ENCODE measurements at regions of chr17 and their contacts with region 1.

Region 1: GRCh38 chr17:18921912-18922451 is 30.0 kb upstream of the SLC5A10 start:
- DNase-seq: peak; percentile 37
- H3K4me3 Mint-ChIP-seq: peak overlapping the region; percentile 8
- H3K27ac Mint-ChIP-seq: peak overlapping the region; percentile 67
- H3K4me1 Mint-ChIP-seq: peaks cover 53% of the 10 kb centered on the region
- H3K27me3 Mint-ChIP-seq: no peaks in the 10 kb centered on the region

Region 2: GRCh38 chr17:18896146-18896545 is 25.8 kb before region 1 on chr17:
- CTCF ChIA-PET with region 1: no interaction called
- POLR2A ChIA-PET with region 1: no interaction called
- intact Hi-C with region 1: loop called (anchors 1 kb)
- DNase-seq: no peak
- H3K4me3 Mint-ChIP-seq: no peak overlapping the region
- H3K27ac Mint-ChIP-seq: no peak overlapping the region
- H3K4me1 Mint-ChIP-seq: peaks cover 11% of the 10 kb centered on the region
- H3K27me3 Mint-ChIP-seq: no peaks in the 10 kb centered on the region

Region 3: GRCh38 chr17:18933102-18934058 is 11.4 kb after region 1 on chr17:
- CTCF ChIA-PET with region 1: no interaction called
- POLR2A ChIA-PET with region 1: no interaction called
- intact Hi-C with region 1: no loop called
- DNase-seq: no peak
- H3K4me3 Mint-ChIP-seq: no peak overlapping the region
- H3K27ac Mint-ChIP-seq: no peak overlapping the region
- H3K4me1 Mint-ChIP-seq: peaks cover 11% of the 10 kb centered on the region
- H3K27me3 Mint-ChIP-seq: no peaks in the 10 kb centered on the region

Region 4: DNA sequence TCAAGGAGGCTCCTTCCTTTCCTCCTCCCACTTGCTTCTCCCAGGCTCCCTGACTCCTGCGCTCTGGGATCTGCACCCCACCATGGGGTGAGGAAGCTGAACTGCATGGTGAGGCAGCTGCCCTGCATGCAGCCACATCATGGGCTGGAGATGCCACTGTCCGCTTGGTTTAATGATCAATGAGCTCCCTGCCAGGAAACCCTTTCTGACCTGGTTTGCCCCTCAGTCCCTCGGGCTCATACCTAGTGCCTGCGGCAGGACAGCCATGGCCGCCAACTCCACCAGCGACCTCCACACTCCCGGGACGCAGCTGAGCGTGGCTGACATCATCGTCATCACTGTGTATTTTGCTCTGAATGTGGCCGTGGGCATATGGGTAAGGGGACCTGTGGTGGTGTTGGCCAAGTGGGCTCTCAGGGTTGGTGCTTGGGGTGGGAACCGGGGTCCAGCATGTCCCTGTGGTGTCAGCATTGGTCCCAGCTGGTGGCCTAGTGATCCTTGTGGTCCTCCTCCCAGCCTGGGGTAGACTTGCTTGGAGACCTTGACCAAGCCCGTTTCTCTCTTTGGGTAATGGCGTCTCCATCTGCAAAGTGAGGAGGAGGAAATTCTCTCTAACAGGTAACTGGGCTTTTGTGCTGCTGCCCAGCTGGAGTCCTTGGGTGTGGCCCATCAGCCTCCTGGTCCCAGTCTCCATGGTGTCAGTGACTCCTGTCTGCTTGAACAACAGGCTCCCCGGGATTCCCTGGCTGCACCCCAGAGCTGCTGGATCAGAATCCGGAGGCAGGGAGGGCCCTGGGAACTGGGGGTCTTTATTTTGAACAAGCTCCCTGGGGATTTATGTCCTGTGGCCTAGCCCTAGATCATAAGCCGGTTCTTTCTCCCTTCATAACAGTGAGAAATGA is 30.2 kb after region 1 on chr17 and contains the start of gene SLC5A10:
- CTCF ChIA-PET with region 1: no interaction called
- POLR2A ChIA-PET with region 1: no interaction called
- intact Hi-C with region 1: no loop called
- DNase-seq: no peak
- H3K4me3 Mint-ChIP-seq: no peak within 1 kb of the TSS
- H3K27ac Mint-ChIP-seq: no peak within 1 kb of the TSS
- H3K4me1 Mint-ChIP-seq: peaks cover 20% of the 10 kb centered on the region
- H3K27me3 Mint-ChIP-seq: no peaks in the 10 kb centered on the region
- total RNA-seq, gene SLC5A10: not detected

Region 5: GRCh38 chr17:18974407-18975132 is 52.6 kb after region 1 on chr17:
- CTCF ChIA-PET with region 1: no interaction called
- POLR2A ChIA-PET with region 1: no interaction called
- intact Hi-C with region 1: loop called (anchors 10 kb)
- DNase-seq: peak; percentile 62
- H3K4me3 Mint-ChIP-seq: no peak overlapping the region
- H3K27ac Mint-ChIP-seq: peak overlapping the region; percentile 10
- H3K4me1 Mint-ChIP-seq: peaks cover 12% of the 10 kb centered on the region
- H3K27me3 Mint-ChIP-seq: no peaks in the 10 kb centered on the region

Measured in activated CD4-positive, alpha-beta memory T cell treated with anti-CD3 and anti-CD28 coated beads for 36 hours (primary cell).